MCF 10A (cell line): ENCODE measurements at regions of chr7 and their contacts with region 1.

Region 1: GRCh38 chr7:117458977-117459583 is 20.7 kb upstream of the CFTR start:
- DNase-seq: peak; percentile 35
- H3K4me3 Mint-ChIP-seq: no peak overlapping the region
- H3K27ac Mint-ChIP-seq: no peak overlapping the region
- H3K4me1 Mint-ChIP-seq: no peaks in the 10 kb centered on the region
- H3K27me3 Mint-ChIP-seq: peaks cover 24% of the 10 kb centered on the region
- CTCF ChIP-seq: peak; percentile 46

Region 2: GRCh38 chr7:117435475-117436043 is 23.5 kb before region 1 on chr7:
- CTCF ChIA-PET with region 1: interaction called, 10 read pairs
- POLR2A ChIA-PET with region 1: no interaction called
- intact Hi-C with region 1: no loop called
- DNase-seq: no peak
- H3K4me3 Mint-ChIP-seq: no peak overlapping the region
- H3K27ac Mint-ChIP-seq: no peak overlapping the region
- H3K4me1 Mint-ChIP-seq: no peaks in the 10 kb centered on the region
- H3K27me3 Mint-ChIP-seq: peaks cover 96% of the 10 kb centered on the region
- CTCF ChIP-seq: no peak

Region 3: DNA sequence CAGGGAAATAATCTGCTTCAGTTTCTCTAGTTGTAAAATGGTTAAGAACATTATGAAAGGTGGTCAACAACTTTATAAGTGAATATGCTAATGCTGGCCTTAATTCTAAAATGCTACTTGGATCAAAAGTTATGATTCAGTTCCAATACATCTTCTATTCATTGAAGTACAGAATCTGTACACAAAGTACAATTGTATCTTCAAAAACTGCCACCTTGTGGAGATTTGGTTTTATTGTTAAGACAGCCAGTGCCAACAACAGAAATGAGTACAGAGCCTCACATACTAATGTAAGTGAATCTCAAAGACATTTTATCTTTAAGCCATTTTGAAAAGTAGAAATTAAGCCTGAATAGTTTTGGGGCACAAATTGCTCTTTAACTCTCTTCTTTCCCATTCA is 214.8 kb after region 1 on chr7:
- CTCF ChIA-PET with region 1: interaction called, 5 read pairs
- POLR2A ChIA-PET with region 1: no interaction called
- intact Hi-C with region 1: loop called (anchors 2 kb)
- DNase-seq: peak; percentile 37
- H3K4me3 Mint-ChIP-seq: no peak overlapping the region
- H3K27ac Mint-ChIP-seq: no peak overlapping the region
- H3K4me1 Mint-ChIP-seq: no peaks in the 10 kb centered on the region
- H3K27me3 Mint-ChIP-seq: peaks cover 39% of the 10 kb centered on the region
- CTCF ChIP-seq: peak; percentile 21

Region 4: DNA sequence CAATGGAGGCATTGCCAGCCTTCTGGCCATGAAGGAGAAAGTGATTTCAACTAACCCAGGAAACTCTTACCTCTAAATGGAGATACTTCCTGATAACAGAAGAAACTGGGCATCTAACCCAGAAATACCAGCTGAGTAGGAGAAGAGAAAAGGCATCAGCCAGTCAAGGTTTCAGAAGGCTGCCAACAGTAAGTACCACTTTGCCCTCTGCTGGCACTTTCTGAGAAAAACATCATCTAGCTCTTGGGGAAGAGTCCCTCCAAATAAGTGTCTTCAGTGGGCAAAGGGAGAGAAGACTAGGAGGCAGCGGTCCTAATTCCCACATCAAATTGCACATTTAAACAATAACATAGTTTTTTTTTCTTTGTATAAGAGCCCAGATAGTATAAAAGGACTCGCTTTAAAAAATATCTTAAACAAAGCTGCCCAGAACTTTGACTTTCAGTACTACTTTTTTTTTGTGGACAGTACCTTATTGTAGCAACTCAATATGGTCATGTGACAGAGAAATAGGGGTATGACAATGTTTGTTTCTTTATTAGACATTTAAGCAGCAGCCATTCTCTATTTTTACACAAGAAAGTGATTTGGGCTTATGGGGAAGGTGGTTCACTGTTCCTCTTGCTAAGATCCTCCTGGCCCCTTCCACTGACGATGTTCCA is 256.8 kb after region 1 on chr7:
- CTCF ChIA-PET with region 1: interaction called, 41 read pairs
- POLR2A ChIA-PET with region 1: interaction called, 3 read pairs
- intact Hi-C with region 1: loop called (anchors 1 kb)
- DNase-seq: peak; percentile 62
- H3K4me3 Mint-ChIP-seq: no peak overlapping the region
- H3K27ac Mint-ChIP-seq: no peak overlapping the region
- H3K4me1 Mint-ChIP-seq: no peaks in the 10 kb centered on the region
- H3K27me3 Mint-ChIP-seq: peaks cover 21% of the 10 kb centered on the region
- CTCF ChIP-seq: peak; percentile 48